ENCODE measurements at regions of chr7 and their contacts with region 1.

Region 1: DNA sequence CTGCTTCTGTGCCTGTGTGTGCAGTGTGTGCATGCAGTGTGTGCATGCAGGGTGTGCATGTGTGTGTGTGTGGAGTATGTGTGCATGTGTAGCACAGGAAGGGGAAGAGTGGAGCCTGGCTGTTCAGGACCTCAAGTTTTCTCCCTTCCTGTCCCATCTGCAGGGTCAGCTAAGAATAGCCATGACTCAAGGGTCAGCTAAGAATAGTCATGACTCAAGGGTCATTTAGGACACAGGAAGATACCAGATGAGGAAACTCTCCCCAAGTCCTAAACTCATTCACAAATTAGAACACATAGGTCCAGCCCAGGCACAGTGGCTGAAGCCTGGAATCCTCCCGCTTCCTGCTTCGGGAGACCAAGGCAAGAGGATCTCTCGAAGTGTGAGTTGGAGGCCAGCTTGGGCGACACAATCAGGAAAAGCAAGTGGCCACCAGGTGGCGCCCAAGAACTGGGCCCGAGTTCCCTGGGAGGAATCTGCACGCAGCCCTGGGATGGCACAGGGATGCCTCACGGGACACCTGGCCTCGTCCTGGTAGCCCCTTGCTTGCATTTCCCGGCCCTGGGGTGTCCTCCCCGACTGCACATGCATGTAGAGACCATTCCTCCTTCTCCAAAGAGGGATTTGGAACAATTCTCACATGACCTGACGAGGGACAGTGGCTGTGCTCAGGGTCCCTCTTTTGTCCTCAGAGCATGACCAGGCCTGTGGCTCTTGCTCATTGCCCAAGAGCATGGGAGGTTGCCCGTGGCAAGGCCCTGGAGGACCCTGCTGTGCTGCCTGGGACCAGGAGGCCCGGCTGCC is 21.4 kb upstream of the VOPP1 start:
- DNase-seq: peak; percentile 51 to 88
- ATAC-seq: peak; percentile 74

Region 2: GRCh38 chr7:55432939-55433784 is 160.6 kb before region 1 on chr7:
- intact Hi-C with region 1: loop called in 1 of 2 experiments (anchors 10 kb)
- DNase-seq: no peak
- ATAC-seq: peak; percentile 70

Measured in left colon (tissue), 2 donors.